Mammary epithelial cell (primary cell): ENCODE measurements at regions of chr1 and their contacts with region 1.

Region 1: GRCh38 chr1:160225345-160225744 is 20.2 kb downstream of the PEA15 start:
- DNase-seq: peak; percentile 53
- H3K4me3 ChIP-seq: no peak overlapping the region
- H3K27ac ChIP-seq: no peak overlapping the region
- H3K4me1 ChIP-seq: peaks cover 15% of the 10 kb centered on the region
- H3K27me3 ChIP-seq: no peaks in the 10 kb centered on the region
- CTCF ChIP-seq: no peak

Region 2: DNA sequence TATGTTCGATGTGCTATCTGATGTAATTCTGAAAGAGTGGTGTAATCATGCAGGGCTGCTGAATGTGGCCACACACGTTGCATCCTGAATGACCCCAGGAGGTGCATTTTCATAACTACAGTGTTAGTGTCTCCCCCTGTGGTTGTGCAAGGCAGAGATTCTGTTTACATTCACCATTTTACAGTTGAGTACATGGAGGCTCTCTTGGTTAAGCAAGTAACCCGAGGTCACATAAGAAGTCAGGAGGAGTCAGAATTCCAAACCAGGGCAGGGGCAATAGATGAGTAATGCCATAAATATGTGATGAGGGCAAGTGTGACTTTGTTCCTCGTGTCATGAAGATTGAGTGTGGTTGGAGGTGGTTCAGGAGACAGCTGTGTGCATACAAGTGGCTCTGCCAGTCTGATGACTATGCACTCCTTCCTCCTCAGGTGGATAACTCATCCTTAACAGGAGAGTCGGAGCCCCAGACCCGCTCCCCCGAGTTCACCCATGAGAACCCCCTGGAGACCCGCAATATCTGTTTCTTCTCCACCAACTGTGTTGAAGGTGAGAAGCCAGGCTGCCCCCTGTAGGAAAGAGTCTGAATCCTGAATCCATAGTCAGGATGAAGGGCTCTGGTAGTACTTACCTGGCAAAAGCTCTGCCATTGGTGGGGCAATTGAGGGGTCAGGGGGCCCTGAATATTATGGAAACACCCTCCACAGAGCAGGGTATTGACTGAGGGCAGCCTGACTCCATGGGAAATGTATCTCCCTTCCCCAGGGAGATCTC is 100.5 kb before region 1 on chr1:
- CTCF ChIA-PET with region 1: interaction called, 13 read pairs
- dilution Hi-C with region 1: no loop called
- in situ Hi-C with region 1: no loop called
- intact Hi-C with region 1: no loop called
- DNase-seq: peak; percentile 84
- H3K4me3 ChIP-seq: no peak overlapping the region
- H3K27ac ChIP-seq: peak overlapping the region; percentile 11
- H3K4me1 ChIP-seq: peaks cover 25% of the 10 kb centered on the region
- H3K27me3 ChIP-seq: no peaks in the 10 kb centered on the region
- CTCF ChIP-seq: peak in 1 of 2 donors; percentile 46

Region 3: DNA sequence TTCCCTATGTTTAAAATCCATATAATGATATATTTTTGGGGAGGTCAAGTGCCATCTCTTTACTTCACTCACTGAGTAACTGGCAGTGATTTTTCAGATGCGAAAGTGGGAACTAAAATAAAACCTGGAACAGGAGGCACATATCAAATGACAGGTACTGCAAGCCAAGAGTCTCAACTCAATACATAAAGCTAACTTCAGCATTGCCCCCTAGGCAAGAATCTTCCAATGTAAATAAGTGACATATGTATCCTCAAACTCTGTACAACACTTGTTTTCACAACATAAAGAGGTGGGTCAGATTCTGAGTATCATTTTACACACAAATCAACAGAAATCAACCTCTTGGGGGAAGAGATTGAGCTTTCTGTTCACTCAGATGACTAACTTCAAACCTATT is 18.9 kb after region 1 on chr1:
- CTCF ChIA-PET with region 1: interaction called, 11 read pairs
- dilution Hi-C with region 1: no loop called
- in situ Hi-C with region 1: no loop called
- intact Hi-C with region 1: no loop called
- DNase-seq: no peak
- H3K4me3 ChIP-seq: no peak overlapping the region
- H3K27ac ChIP-seq: no peak overlapping the region
- H3K4me1 ChIP-seq: no peaks in the 10 kb centered on the region
- H3K27me3 ChIP-seq: no peaks in the 10 kb centered on the region
- CTCF ChIP-seq: no peak

Region 4: GRCh38 chr1:160261893-160262794 is 36.8 kb after region 1 on chr1 and contains the start of gene DCAF8:
- CTCF ChIA-PET with region 1: no interaction called
- dilution Hi-C with region 1: no loop called
- in situ Hi-C with region 1: no loop called
- intact Hi-C with region 1: no loop called
- DNase-seq: peak; percentile 96
- H3K4me3 ChIP-seq: peak within 1 kb of the TSS; percentile 81 to 97 (median 82)
- H3K27ac ChIP-seq: peak within 1 kb of the TSS; percentile 93
- H3K4me1 ChIP-seq: peaks cover 21% of the 10 kb centered on the region
- H3K27me3 ChIP-seq: no peaks in the 10 kb centered on the region
- CTCF ChIP-seq: no peak
- total RNA-seq, gene DCAF8: 72.0 to 93.8 TPM

Region 5: DNA sequence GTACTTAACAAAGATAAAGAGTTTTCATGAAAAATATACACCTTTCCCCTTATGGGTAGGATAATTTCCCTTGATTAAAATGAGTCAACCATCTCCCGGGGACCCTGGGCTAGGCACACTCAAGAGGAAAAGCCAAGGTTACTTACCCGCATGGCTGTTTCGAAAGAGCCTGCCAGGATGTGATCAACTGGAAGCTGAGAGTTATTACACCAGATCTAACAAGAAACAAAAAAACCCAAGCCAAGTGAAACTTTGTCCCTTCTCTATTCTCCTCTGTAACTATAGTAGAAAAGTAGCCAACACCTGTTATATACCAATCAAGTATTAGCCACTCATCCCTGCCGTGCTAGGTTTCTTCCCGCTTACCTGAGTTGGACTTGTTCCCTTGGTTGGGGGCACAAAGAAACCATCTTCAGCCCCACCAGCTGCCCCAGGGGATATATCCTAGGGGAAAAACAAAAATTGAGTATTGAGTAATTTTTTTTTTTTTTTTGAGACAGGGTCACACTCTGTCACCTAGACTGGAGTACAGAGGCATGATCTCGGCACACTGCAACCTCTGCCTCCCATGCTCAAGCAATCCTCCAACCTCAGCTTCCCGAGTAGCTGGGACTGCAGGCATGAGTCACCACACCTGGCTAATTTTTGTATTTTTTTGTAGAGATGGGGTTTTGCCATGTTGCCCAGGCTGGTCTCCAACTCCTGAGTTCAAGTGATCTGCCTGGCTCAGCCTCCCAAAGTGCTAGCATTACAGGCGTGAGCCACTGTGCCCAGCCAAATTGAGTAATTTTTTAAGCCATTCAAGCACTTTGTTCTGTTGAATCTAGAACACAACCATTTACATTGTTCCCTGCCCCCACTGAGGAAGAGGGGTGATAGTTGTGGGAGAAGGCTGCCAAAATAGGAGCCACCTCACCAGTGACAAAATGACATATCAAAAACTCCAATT is 67.9 kb after region 1 on chr1:
- CTCF ChIA-PET with region 1: no interaction called
- dilution Hi-C with region 1: no loop called
- in situ Hi-C with region 1: no loop called
- intact Hi-C with region 1: no loop called
- DNase-seq: no peak
- H3K4me3 ChIP-seq: no peak overlapping the region
- H3K27ac ChIP-seq: no peak overlapping the region
- H3K4me1 ChIP-seq: no peaks in the 10 kb centered on the region
- H3K27me3 ChIP-seq: no peaks in the 10 kb centered on the region
- CTCF ChIP-seq: no peak